Activated B cell treated with CpG ODN at 0.5 μM for 24 hours (primary cell): ENCODE measurements at regions of chr12 and their contacts with region 1.

Region 1: DNA sequence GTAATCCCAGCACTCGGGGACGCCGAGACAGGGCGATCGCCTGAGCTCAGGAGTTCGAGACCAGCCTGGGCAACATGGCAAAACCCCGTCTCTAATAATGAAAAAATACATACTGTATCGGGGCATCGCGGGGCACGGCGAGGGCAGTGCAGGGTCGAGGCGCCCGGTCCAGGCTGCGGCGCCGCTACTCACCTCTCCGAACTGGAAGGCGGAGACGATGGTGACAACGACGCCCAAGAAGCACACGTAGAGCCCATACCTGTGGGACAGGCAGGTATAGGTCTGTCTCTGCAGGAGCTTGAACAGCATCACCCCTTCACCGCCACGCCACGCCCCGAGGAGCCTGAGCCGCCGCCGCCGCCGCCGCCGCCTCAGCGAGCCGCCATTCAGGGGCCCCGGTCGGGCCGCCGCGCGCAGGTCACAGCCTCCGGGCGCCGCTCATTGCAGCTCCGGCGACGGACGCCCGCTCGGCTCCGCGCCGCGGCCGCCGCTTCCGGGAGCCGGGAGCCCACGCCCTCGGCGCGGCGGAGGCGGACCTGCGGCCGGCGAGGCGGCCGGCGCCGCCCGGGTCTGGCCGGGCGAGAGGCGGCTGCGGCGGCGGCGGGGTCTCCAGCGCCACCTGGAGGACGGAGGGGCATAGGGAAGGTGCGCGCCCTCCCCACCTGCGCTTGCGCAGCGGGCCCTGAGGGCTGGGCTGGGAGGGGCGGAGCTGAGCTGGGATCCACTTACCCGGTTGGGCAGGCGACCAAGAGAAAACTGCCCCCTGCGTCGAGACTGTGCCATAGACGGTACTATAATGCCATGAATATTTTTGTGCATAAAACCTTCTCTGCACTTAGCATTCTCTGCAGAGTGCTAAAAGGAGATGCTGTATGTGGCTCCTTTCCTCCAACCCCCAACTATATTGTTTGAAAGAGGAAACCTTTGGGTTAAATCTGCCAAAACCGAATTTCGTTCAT is at the start of gene GNPTAB:
- DNase-seq: peak; percentile 97
- ATAC-seq: peak; percentile 94
- H3K4me3 Mint-ChIP-seq: peak within 1 kb of the TSS; percentile 96
- H3K27ac Mint-ChIP-seq: peak within 1 kb of the TSS; percentile 87
- H3K4me1 Mint-ChIP-seq: peaks cover 33% of the 10 kb centered on the region
- H3K27me3 Mint-ChIP-seq: no peaks in the 10 kb centered on the region
- CTCF ChIP-seq: no peak
- total RNA-seq, gene GNPTAB: 41.8 and 42.8 TPM in 2 replicates

Region 2: DNA sequence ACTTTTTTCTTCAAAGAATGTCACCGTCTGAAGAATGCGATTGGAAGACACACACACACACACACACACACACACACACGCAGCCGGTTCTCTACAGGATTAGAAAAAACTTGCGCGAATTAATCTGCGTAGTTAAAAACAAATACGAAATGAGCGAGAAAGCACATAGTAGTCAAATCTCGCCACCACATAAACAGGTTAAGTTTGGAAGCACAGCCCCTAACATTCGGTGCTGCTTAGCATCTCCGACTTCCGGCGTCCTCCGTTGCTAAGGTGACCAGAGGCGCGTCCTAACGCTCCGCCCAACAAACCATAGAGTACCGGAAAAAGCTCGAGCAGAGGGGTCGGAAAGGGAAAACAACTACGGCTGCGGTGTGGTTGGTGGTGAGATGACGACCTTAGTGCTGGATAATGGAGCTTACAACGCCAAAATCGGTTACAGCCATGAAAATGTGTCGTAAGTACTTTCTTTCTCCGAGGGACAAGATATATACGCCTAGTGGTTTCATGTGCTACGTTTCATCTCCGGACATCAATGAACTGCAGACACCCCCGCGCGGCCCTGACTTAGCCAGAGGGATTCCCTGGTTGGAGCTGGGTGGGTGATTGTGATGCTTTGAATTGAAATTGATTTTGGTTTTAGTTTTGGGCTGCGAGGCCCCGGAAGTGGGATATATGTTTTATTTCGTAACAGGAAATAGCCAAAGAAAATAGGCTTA is 1630.0 kb before region 1 on chr12 and contains the start of gene ACTR6:
- CTCF ChIA-PET with region 1: no interaction called
- POLR2A ChIA-PET with region 1: no interaction called
- intact Hi-C with region 1: loop called (anchors 5 kb)
- DNase-seq: peak; percentile 93
- ATAC-seq: peak; percentile 85
- H3K4me3 Mint-ChIP-seq: peak within 1 kb of the TSS; percentile 98
- H3K27ac Mint-ChIP-seq: peak within 1 kb of the TSS; percentile 95
- H3K4me1 Mint-ChIP-seq: peaks cover 29% of the 10 kb centered on the region
- H3K27me3 Mint-ChIP-seq: no peaks in the 10 kb centered on the region
- CTCF ChIP-seq: no peak
- total RNA-seq, gene ACTR6: 23.5 and 27.5 TPM in 2 replicates

Region 3: DNA sequence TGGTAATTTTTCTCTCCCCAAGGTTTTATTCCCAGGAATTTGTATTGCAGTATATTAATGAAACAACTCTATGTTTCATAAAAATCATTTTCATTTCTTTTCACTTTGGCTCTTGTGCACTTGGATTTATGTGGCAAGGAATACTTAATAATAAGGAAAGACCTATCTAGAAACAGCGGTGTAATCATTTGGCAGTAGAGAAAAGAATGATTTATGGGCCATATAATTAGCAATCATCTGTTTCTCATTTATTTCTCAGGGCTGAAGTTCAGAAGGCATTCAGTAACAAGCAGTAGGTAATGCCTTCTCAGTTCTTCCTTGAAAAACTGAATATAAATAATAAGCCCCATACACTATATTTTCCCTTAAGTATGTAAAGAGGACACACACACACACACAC is 863.5 kb before region 1 on chr12:
- CTCF ChIA-PET with region 1: no interaction called
- POLR2A ChIA-PET with region 1: no interaction called
- intact Hi-C with region 1: no loop called
- DNase-seq: no peak
- ATAC-seq: no peak
- H3K4me3 Mint-ChIP-seq: no peak overlapping the region
- H3K27ac Mint-ChIP-seq: no peak overlapping the region
- H3K4me1 Mint-ChIP-seq: no peaks in the 10 kb centered on the region
- H3K27me3 Mint-ChIP-seq: no peaks in the 10 kb centered on the region
- CTCF ChIP-seq: no peak

Region 4: GRCh38 chr12:101490286-101490920 is 340.2 kb before region 1 on chr12:
- CTCF ChIA-PET with region 1: no interaction called
- POLR2A ChIA-PET with region 1: no interaction called
- intact Hi-C with region 1: loop called (anchors 2 kb)
- DNase-seq: no peak
- ATAC-seq: peak; percentile 61
- H3K4me3 Mint-ChIP-seq: no peak overlapping the region
- H3K27ac Mint-ChIP-seq: no peak overlapping the region
- H3K4me1 Mint-ChIP-seq: no peaks in the 10 kb centered on the region
- H3K27me3 Mint-ChIP-seq: peaks cover 12% of the 10 kb centered on the region
- CTCF ChIP-seq: no peak

Region 5: DNA sequence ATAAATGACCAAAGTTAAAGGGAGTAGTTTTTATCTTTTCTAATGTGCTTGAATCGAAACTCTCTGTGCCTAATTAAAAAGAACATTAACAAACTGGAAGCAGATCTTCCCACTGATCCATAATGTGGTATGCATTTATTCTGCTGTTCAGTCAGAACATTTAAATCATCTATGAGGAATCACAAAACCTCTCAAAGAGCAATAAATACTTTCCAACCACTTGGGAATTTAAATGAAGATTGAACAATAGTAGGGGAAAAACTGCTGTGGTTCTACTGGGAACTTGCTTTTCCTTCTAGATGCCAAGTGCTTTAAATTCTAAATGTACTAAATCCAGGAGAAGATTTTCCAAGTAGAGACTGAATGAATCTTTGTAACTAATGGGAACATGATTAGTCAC is 145.6 kb before region 1 on chr12:
- CTCF ChIA-PET with region 1: no interaction called
- POLR2A ChIA-PET with region 1: no interaction called
- intact Hi-C with region 1: no loop called
- DNase-seq: no peak
- ATAC-seq: no peak
- H3K4me3 Mint-ChIP-seq: no peak overlapping the region
- H3K27ac Mint-ChIP-seq: no peak overlapping the region
- H3K4me1 Mint-ChIP-seq: peaks cover 2% of the 10 kb centered on the region
- H3K27me3 Mint-ChIP-seq: peaks cover 5% of the 10 kb centered on the region
- CTCF ChIP-seq: no peak

Region 6: DNA sequence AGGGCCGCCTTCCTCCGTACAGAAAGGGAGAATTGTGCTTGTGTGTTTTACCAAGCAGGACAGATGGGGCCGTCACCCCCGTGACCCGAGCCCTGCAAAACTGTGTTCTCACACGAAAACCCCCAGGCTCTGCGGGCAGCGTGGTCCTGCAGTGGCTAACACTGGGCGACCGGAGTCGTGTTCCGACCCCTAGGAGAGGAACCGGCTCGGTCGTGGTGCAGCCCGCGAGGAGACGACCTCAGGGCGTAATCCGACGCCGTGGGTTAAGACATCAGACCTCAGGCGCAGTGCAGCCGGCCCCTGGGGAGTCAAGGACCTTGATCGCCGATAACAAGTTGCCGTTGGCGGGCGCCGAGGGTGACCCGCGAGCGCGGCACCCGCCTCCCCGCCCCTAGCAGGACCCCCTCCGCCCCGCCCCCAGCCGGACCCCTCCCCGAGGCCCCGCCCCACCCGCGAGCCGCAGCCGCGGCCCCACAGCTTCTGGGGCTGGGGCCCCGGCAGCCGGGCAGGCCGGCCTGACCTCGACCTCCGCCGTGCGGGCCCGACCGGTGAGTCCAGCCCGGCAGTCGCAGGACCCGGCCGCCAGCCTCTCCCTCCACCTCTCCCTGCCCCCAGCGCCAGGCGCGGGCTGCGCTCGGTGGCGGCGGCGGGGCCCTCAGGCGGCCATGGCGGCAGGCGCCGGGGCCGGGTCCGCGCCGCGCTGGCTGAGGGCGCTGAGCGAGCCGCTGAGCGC is 133.3 kb before region 1 on chr12 and contains the start of gene CHPT1:
- CTCF ChIA-PET with region 1: no interaction called
- POLR2A ChIA-PET with region 1: interaction called, 9 read pairs
- intact Hi-C with region 1: loop called (anchors 2 kb)
- DNase-seq: peak; percentile 78
- ATAC-seq: peak; percentile 78
- H3K4me3 Mint-ChIP-seq: peak within 1 kb of the TSS; percentile 94
- H3K27ac Mint-ChIP-seq: peak within 1 kb of the TSS; percentile 93
- H3K4me1 Mint-ChIP-seq: peaks cover 60% of the 10 kb centered on the region
- H3K27me3 Mint-ChIP-seq: no peaks in the 10 kb centered on the region
- CTCF ChIP-seq: no peak
- total RNA-seq, gene CHPT1: 36.8 and 42.7 TPM in 2 replicates

Region 7: GRCh38 chr12:101773650-101774162 is 56.9 kb before region 1 on chr12:
- CTCF ChIA-PET with region 1: interaction called, 70 read pairs
- POLR2A ChIA-PET with region 1: interaction called, 10 read pairs
- intact Hi-C with region 1: loop called (anchors 1 kb)
- DNase-seq: peak; percentile 27
- ATAC-seq: peak; percentile 92
- H3K4me3 Mint-ChIP-seq: no peak overlapping the region
- H3K27ac Mint-ChIP-seq: no peak overlapping the region
- H3K4me1 Mint-ChIP-seq: peaks cover 2% of the 10 kb centered on the region
- H3K27me3 Mint-ChIP-seq: no peaks in the 10 kb centered on the region
- CTCF ChIP-seq: peak; percentile 95

Region 8: GRCh38 chr12:101945369-101946231 is 115.0 kb after region 1 on chr12:
- CTCF ChIA-PET with region 1: no interaction called
- POLR2A ChIA-PET with region 1: no interaction called
- intact Hi-C with region 1: no loop called
- DNase-seq: no peak
- ATAC-seq: no peak
- H3K4me3 Mint-ChIP-seq: no peak overlapping the region
- H3K27ac Mint-ChIP-seq: no peak overlapping the region
- H3K4me1 Mint-ChIP-seq: peaks cover 18% of the 10 kb centered on the region
- H3K27me3 Mint-ChIP-seq: no peaks in the 10 kb centered on the region
- CTCF ChIP-seq: no peak

Region 9: DNA sequence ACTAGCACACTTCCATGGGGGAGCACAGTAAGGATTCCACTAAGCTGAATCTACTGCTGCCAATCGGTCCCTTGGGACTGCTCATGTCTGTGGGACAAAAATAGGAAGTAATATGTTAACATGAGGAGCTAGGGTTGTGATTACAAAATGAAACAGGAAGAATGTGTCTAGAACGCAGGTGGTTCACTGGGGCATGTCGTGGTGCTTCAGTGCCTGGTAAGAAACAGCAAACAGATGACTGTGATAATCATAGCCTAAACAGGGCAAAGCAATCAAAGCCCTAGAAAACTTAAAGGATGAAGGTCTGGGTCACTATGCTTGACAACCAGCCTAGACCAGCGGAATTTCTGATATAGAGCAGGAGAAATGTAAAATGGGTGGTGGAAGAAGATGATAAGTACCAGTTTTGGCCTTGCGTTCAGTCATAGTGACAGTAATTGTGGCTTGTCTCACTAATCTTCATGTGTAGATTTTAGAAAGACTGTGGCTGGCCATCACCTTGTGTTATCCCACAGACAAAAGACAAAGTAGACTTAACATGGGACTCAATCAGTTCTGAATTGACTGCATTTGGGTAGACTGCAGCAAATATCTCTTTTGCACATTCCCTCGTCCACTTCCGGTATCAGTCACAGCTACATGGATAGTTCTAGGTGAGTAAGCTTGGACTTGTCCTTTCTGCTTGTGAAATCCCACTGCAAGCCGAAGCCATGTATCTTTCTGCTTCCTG is 179.8 kb after region 1 on chr12:
- CTCF ChIA-PET with region 1: no interaction called
- POLR2A ChIA-PET with region 1: no interaction called
- intact Hi-C with region 1: loop called (anchors 2 kb)
- DNase-seq: peak; percentile 23
- ATAC-seq: peak; percentile 96
- H3K4me3 Mint-ChIP-seq: peak overlapping the region; percentile 63
- H3K27ac Mint-ChIP-seq: peak overlapping the region; percentile 96
- H3K4me1 Mint-ChIP-seq: peaks cover 33% of the 10 kb centered on the region
- H3K27me3 Mint-ChIP-seq: no peaks in the 10 kb centered on the region
- CTCF ChIP-seq: no peak

Region 10: GRCh38 chr12:102182635-102183034 is 352.0 kb after region 1 on chr12:
- CTCF ChIA-PET with region 1: no interaction called
- POLR2A ChIA-PET with region 1: no interaction called
- intact Hi-C with region 1: no loop called
- DNase-seq: no peak
- ATAC-seq: no peak
- H3K4me3 Mint-ChIP-seq: no peak overlapping the region
- H3K27ac Mint-ChIP-seq: no peak overlapping the region
- H3K4me1 Mint-ChIP-seq: no peaks in the 10 kb centered on the region
- H3K27me3 Mint-ChIP-seq: no peaks in the 10 kb centered on the region
- CTCF ChIP-seq: no peak